ENCODE measurements at regions of chr3 and their contacts with region 1.

Region 1: GRCh38 chr3:14947886-14948555 is 638 bp downstream of the NR2C2 start:
- DNase-seq: peak; percentile 98
- ATAC-seq: peak; percentile 97 to 100 (median 98)
- H3K4me3 ChIP-seq: peak overlapping the region; percentile 70 to 95 (median 90)
- H3K27ac ChIP-seq: peak overlapping the region; percentile 98 to 100 (median 99)
- H3K4me1 ChIP-seq: peaks cover 6 to 49% (median 34%) of the 10 kb centered on the region in 12 donors
- H3K27me3 ChIP-seq: no peaks in the 10 kb centered on the region
- CTCF ChIP-seq: no peak
- POLR2A ChIP-seq: peak in 1 of 2 donors; percentile 35

Region 2: GRCh38 chr3:14651440-14652251 is 296.4 kb before region 1 on chr3 and contains the start of gene CCDC174:
- intact Hi-C with region 1: loop called in 1 of 10 experiments (anchors 1 kb)
- DNase-seq: peak; percentile 92 to 97 (median 96)
- ATAC-seq: peak; percentile 98 to 99 (median 98)
- H3K4me3 ChIP-seq: peak within 1 kb of the TSS; percentile 59 to 93 (median 81)
- H3K27ac ChIP-seq: peak within 1 kb of the TSS; percentile 58 to 96 (median 90)
- H3K4me1 ChIP-seq: peaks cover 0 to 43% (median 32%) of the 10 kb centered on the region in 12 donors
- H3K27me3 ChIP-seq: no peaks in the 10 kb centered on the region
- CTCF ChIP-seq: peak in 1 of 12 donors; percentile 15
- POLR2A ChIP-seq: peak in 1 of 2 donors; percentile 74
- total RNA-seq, gene CCDC174: 8.7 to 16.1 (median 11.7) TPM

Region 3: GRCh38 chr3:14890476-14890875 is 57.5 kb before region 1 on chr3:
- intact Hi-C with region 1: no loop called
- DNase-seq: no peak
- ATAC-seq: peak in 2 of 4 donors; percentile 30 to 31
- H3K4me3 ChIP-seq: no peak overlapping the region
- H3K27ac ChIP-seq: no peak overlapping the region
- H3K4me1 ChIP-seq: peaks cover 0 to 27% (median 11%) of the 10 kb centered on the region in 12 donors
- H3K27me3 ChIP-seq: peaks cover 0 to 11% (median 0%) of the 10 kb centered on the region in 9 donors
- CTCF ChIP-seq: no peak
- POLR2A ChIP-seq: no peak

Region 4: DNA sequence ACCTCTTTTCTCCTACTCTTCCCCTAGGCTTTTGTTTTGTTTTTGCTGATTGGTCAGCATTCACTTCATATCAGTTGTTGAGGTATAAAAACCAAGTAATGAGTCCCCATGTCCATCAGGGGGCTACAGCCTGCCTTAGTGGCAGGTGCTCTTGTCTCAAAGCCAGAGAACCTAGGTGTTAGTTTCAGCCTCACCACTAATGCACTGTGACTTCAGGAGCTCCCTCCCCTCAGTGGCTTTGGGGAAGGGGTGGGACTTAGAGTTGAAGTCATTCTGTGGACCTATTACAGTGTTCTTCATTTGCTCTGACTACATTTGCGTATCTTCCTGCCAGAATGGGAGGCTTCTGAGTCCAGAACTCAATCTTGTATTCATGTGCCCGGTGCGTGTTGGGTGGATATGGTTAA is 41.0 kb after region 1 on chr3:
- intact Hi-C with region 1: loop called in 3 of 10 experiments (anchors 5 kb)
- DNase-seq: no peak
- ATAC-seq: no peak
- H3K4me3 ChIP-seq: no peak overlapping the region
- H3K27ac ChIP-seq: peak overlapping the region in 1 of 12 donors; percentile 3
- H3K4me1 ChIP-seq: peaks cover 3 to 55% (median 41%) of the 10 kb centered on the region in 12 donors
- H3K27me3 ChIP-seq: no peaks in the 10 kb centered on the region
- CTCF ChIP-seq: no peak
- POLR2A ChIP-seq: no peak

Region 5: GRCh38 chr3:15032650-15033049 is 84.6 kb after region 1 on chr3:
- intact Hi-C with region 1: no loop called
- DNase-seq: no peak
- ATAC-seq: no peak
- H3K4me3 ChIP-seq: no peak overlapping the region
- H3K27ac ChIP-seq: no peak overlapping the region
- H3K4me1 ChIP-seq: no peaks in the 10 kb centered on the region
- H3K27me3 ChIP-seq: no peaks in the 10 kb centered on the region
- CTCF ChIP-seq: no peak
- POLR2A ChIP-seq: no peak

Region 6: DNA sequence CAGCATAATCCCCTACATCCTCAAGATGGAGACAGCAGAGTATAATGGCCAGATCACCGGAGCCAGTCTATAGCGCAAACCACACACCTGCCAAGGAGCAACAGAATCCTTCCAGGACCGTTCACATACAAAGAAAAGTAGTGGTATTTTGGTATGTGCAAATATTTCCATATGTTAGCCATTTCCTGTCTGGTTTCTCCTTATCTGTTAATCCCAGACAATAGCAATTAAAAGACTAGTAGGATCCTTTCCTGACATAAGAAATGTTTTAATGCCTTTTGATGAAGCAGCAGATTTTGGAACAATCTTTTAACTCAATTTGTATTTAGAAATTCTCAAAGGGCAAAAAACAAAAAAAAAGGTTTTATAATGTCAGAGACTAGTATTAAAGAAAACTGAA is 94.9 kb after region 1 on chr3:
- intact Hi-C with region 1: loop called in 3 of 10 experiments (anchors 10 kb)
- DNase-seq: no peak
- ATAC-seq: no peak
- H3K4me3 ChIP-seq: no peak overlapping the region
- H3K27ac ChIP-seq: no peak overlapping the region
- H3K4me1 ChIP-seq: peaks cover 0 to 34% (median 9%) of the 10 kb centered on the region in 12 donors
- H3K27me3 ChIP-seq: no peaks in the 10 kb centered on the region
- CTCF ChIP-seq: no peak
- POLR2A ChIP-seq: no peak

Region 7: GRCh38 chr3:15051531-15051930 is 103.5 kb after region 1 on chr3:
- intact Hi-C with region 1: loop called in 4 of 10 experiments (anchors 5 to 10 kb)
- DNase-seq: no peak
- ATAC-seq: peak; percentile 72 to 83 (median 74)
- H3K4me3 ChIP-seq: no peak overlapping the region
- H3K27ac ChIP-seq: no peak overlapping the region
- H3K4me1 ChIP-seq: peaks cover 0 to 17% (median 0%) of the 10 kb centered on the region in 12 donors
- H3K27me3 ChIP-seq: no peaks in the 10 kb centered on the region
- CTCF ChIP-seq: peak in 11 of 12 donors; percentile 15 to 53 (median 39)
- POLR2A ChIP-seq: no peak

Region 8: GRCh38 chr3:15098503-15099363 is 150.7 kb after region 1 on chr3 and contains the start of gene RBSN:
- intact Hi-C with region 1: loop called in 1 of 10 experiments (anchors 10 kb)
- DNase-seq: peak; percentile 94 to 98 (median 97)
- ATAC-seq: peak; percentile 38 to 79 (median 76)
- H3K4me3 ChIP-seq: peak within 1 kb of the TSS; percentile 75 to 93 (median 82)
- H3K27ac ChIP-seq: peak within 1 kb of the TSS; percentile 54 to 94 (median 87)
- H3K4me1 ChIP-seq: peaks cover 3 to 46% (median 18%) of the 10 kb centered on the region in 12 donors
- H3K27me3 ChIP-seq: no peaks in the 10 kb centered on the region
- CTCF ChIP-seq: no peak
- POLR2A ChIP-seq: peak in 1 of 2 donors; percentile 89
- total RNA-seq, gene RBSN: 17.9 to 24.1 (median 21.6) TPM

Region 9: DNA sequence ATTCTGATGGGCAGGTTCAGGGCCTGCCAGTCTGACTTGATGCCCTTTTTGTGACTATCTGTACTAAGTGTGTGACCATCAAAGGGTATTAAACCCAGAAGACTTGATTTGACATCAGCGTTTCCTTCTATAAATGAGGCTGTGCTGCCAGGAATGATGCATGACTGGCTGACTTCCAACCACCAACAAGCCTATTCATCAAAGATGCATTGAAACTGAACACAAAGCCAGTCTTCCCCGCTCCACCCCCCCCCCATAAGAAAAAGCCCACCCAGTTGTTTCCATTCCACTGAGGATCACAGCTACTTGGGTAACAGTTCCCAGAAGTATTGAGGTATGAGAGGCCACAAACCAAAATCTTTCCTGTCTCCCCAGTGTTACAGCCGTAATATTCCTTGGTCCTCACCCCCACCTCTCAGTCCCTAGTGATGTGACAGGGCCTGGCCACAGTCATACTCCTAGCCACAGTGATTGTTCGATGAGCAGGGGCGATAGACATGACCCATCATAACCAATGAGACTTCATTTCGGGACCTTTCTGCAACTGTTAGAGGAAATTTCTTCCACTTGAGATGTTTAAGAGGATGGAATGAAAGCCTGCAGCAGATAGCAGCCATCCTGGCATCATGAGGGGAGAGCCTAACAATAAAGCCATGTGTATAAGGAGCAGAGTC is 361.8 kb after region 1 on chr3:
- intact Hi-C with region 1: no loop called
- DNase-seq: no peak
- ATAC-seq: no peak
- H3K4me3 ChIP-seq: no peak overlapping the region
- H3K27ac ChIP-seq: peak overlapping the region in 4 of 12 donors; percentile 9 to 24 (median 18)
- H3K4me1 ChIP-seq: peaks cover 0 to 70% (median 27%) of the 10 kb centered on the region in 12 donors
- H3K27me3 ChIP-seq: no peaks in the 10 kb centered on the region
- CTCF ChIP-seq: no peak
- POLR2A ChIP-seq: no peak